BJ (cell line): ENCODE measurements at regions of chr16 and their contacts with region 1.

Region 1: GRCh38 chr16:19589771-19590302 is 34.3 kb downstream of the VPS35L start:
- DNase-seq: peak; percentile 58
- H3K4me3 ChIP-seq: no peak overlapping the region
- H3K27me3 ChIP-seq: no peaks in the 10 kb centered on the region
- CTCF ChIP-seq: no peak

Region 2: DNA sequence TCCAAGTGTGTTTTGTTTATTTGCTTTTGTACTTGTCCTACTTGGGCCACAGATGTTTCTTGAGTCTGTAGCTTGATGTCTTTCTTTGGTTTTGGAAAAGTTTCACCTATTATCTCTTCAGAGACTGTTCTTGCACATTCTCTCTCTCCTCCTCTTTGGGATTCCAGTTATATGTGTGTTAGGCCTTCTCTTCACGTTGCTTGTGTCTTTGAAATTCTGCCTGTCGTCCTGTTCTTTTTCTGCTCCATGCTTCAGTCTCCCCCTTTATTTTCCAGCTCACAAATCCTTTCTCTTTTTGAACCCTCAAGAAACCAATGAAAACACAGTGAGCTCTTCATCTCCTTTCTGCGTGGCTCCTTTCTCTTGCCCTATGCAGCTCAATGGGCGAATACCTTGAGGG is 26.5 kb before region 1 on chr16:
- CTCF ChIA-PET with region 1: interaction called, 11 read pairs
- POLR2A ChIA-PET with region 1: interaction called, 21 read pairs
- DNase-seq: no peak
- H3K4me3 ChIP-seq: no peak overlapping the region
- H3K27me3 ChIP-seq: no peaks in the 10 kb centered on the region
- CTCF ChIP-seq: no peak